ENCODE measurements at regions of chr22 and their contacts with region 1.

Region 1: DNA sequence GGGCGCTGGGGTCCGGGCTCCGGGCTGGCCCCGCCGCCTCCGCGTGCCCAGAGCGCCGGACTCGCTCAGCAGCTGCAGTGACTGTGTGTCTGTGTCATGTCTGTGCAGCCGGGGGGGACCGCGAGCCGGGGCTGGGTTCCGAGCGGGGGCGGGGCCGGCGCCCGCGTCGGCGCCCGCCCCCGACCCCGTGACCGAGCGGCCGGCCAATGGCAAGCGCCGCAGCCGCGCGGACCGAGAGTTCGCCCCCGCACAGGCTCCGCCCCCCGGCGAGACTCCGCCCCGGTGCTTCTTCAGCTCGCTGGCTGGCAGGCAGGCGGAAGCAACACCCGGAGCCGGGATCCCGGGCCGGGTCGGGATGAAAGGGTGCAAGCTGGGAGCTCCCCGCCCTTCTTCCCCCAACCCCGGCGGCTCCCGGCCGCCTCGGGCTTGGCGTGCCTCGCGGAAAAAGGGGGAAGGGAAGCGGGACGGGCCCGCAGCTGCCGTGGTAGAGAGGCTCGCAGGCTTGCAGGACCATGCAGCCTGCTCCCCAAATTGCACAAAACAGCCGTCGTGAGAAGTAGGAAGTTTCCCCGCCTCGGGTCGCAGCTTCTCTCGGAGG is 750 bp upstream of the LARGE1 start:
- DNase-seq: peak; percentile 95 to 97
- ATAC-seq: peak; percentile 78 to 81
- H3K4me3 ChIP-seq: peak overlapping the region; percentile 71 to 95 (median 82)
- H3K27ac ChIP-seq: peak overlapping the region; percentile 74 to 87 (median 78)
- H3K4me1 ChIP-seq: peaks cover 33 to 40% of the 10 kb centered on the region in 2 donors
- H3K27me3 ChIP-seq: no peaks in the 10 kb centered on the region
- CTCF ChIP-seq: peak in 1 of 5 experiments; percentile 10
- POLR2A ChIP-seq: peak; percentile 95 to 97

Region 2: DNA sequence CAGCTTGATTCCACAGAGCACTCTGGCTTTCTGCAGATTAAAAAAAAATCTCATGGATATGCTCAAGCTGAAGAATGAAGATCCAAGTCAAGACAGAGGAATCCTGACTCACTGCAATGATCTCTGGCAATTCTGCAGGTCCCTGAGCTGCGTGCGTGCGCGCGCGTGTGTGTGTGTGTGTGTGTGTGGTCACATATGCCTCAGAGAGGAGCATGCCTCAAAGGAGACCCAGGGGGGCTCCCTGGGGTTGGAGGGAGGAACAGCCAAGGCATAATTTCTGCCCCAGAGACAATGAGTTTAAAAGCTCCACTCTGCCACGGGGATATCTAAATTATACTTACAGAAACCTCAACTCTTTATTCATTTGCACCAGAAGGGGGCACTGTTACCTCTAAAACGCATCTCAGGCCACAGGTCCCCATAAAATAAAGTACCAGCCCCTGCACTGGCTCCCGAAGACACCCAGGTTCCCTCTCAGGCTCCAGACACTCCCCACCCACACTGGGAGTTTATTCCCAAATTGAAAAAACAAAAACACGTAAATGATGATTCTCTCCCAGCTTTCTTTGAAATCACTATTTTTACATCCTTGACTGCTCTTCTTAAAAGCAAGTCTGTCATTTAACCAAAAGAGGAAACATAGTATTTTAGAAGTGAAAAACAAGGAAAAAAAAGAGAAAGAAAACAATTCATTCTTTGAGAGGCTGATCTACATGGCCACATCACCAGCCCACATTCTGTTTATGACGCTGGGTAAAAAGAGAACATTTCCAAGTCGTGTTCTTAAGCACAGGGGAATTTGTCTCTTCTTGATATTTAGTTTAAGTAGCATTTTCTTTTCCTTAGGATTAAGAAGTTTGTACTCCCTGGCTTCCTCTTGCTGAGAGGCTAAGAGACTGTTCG is 401.7 kb before region 1 on chr22:
- in situ Hi-C with region 1: no loop called
- intact Hi-C with region 1: loop called (anchors 1 kb)
- DNase-seq: no peak
- ATAC-seq: peak; percentile 59 to 71
- H3K4me3 ChIP-seq: no peak overlapping the region
- H3K27ac ChIP-seq: no peak overlapping the region
- H3K4me1 ChIP-seq: peaks cover 4 to 11% of the 10 kb centered on the region in 2 donors
- H3K27me3 ChIP-seq: no peaks in the 10 kb centered on the region
- CTCF ChIP-seq: peak; percentile 31 to 71 (median 63)
- POLR2A ChIP-seq: no peak

Region 3: DNA sequence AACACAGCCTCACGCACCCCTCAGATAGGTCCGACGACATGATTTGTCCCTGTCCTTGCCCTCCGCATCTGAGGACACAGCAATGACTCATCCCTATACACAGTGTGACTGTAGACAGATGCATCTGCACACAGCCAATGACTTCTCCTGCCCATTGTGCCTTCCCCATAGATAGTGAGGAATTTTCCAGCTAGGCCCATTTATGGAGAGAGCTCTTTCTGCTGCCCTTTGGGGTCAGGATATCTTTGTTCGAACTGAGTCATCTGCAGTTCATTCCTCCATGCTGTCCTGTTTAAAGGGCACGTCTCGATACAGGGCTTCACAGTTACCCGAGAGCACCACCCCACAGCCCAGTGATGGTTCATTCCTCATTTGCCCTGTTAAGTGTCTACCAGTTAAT is 97.5 kb before region 1 on chr22:
- in situ Hi-C with region 1: loop called in 1 of 4 experiments (anchors 10 kb)
- intact Hi-C with region 1: loop called (anchors 5 kb)
- DNase-seq: peak; percentile 56 to 67
- ATAC-seq: peak; percentile 64 to 79
- H3K4me3 ChIP-seq: no peak overlapping the region
- H3K27ac ChIP-seq: peak overlapping the region; percentile 74 to 83 (median 80)
- H3K4me1 ChIP-seq: peaks cover 51 to 68% of the 10 kb centered on the region in 2 donors
- H3K27me3 ChIP-seq: no peaks in the 10 kb centered on the region
- CTCF ChIP-seq: no peak
- POLR2A ChIP-seq: no peak

Region 4: DNA sequence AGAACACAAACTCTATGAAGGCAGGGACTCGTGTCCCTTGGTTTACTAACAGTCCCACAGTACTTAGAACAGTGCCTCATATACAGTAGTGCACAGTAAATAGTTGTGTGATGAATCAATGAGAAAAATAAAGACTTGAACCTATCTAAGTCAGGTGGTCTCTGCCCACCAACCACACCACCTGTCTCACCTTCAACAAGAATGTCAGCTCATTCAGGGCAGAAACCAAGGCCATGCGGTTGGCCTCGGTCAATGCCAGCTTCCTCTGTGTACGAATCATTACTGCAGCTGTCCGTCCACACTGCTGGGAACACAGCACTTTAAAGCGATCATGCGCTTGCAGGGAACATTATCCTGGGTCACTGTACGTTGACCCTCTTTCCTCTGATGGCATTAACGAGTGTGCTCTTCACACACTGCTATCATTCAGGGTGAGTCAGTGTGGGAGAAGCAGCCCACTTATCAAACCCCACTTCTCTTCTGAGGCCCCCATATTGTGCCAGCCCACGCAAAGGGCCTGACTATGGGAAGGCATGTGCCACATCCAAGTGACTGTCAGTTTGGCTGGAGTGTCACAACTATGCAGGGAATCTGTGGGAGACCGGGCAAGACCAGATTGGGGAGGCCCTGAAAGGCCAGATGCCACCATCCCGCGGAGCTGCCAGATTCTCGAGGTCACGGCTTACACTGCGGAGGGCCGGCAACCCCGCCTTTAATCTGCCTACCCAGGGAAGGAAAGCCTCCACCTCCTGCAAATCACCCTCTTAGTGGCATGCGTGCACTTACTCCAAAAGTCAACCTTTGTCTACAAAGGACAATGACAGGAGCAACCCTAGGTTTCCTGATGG is 36.8 kb before region 1 on chr22:
- in situ Hi-C with region 1: no loop called
- intact Hi-C with region 1: loop called (anchors 2 kb)
- DNase-seq: peak; percentile 74 to 84
- ATAC-seq: peak; percentile 88 to 89
- H3K4me3 ChIP-seq: peak overlapping the region in 2 of 4 donors; percentile 23 to 32
- H3K27ac ChIP-seq: peak overlapping the region; percentile 82 to 92 (median 87)
- H3K4me1 ChIP-seq: peaks cover 28 to 58% of the 10 kb centered on the region in 2 donors
- H3K27me3 ChIP-seq: no peaks in the 10 kb centered on the region
- CTCF ChIP-seq: no peak
- POLR2A ChIP-seq: peak; percentile 23 to 67

Region 5: DNA sequence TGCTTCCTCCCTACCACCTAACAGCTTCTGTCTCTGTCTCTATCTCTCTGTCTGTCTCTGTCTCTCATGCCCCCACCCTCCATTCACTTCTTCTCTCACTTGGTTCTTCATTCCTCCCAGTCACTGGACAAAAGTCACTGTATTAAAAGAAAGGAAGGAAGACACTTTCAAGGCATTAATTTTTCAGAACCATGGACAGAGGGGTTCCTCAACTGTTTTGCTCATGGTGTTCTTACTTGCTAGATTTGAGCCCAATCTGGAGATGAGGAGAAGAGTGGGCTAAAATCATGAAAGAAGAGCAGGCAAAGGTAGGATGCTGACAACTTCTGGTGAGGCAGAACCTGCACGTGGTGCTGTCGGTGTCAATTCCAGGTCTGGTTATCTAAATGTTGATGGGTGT is 115.9 kb after region 1 on chr22:
- in situ Hi-C with region 1: no loop called
- intact Hi-C with region 1: no loop called
- DNase-seq: no peak
- ATAC-seq: no peak
- H3K4me3 ChIP-seq: no peak overlapping the region
- H3K27ac ChIP-seq: no peak overlapping the region
- H3K4me1 ChIP-seq: no peaks in the 10 kb centered on the region
- H3K27me3 ChIP-seq: no peaks in the 10 kb centered on the region
- CTCF ChIP-seq: no peak
- POLR2A ChIP-seq: no peak

Region 6: DNA sequence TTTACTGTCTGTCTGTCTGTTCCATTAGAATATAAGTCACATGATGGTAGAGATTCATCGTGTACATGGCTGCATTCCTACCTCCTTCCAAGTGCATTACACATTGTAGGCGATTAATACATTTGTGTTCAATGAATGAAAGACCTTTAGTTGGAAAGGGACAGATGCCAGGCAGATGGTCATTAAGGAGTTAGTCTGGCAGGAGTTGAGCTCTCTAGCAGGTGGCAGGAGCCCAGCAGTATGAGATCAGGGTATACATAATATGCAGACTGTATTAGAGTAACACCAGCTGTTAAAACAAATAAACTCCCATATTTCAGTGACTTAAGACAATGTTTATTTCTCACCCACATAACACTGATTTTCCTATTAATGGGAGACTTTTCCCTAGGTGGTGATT is 147.0 kb after region 1 on chr22:
- in situ Hi-C with region 1: no loop called
- intact Hi-C with region 1: no loop called
- DNase-seq: no peak
- ATAC-seq: no peak
- H3K4me3 ChIP-seq: no peak overlapping the region
- H3K27ac ChIP-seq: no peak overlapping the region
- H3K4me1 ChIP-seq: no peaks in the 10 kb centered on the region
- H3K27me3 ChIP-seq: no peaks in the 10 kb centered on the region
- CTCF ChIP-seq: no peak
- POLR2A ChIP-seq: no peak

Region 7: GRCh38 chr22:34111210-34111824 is 190.3 kb after region 1 on chr22:
- in situ Hi-C with region 1: loop called in 3 of 4 experiments (anchors 5 to 10 kb)
- intact Hi-C with region 1: loop called (anchors 2 kb)
- DNase-seq: peak in 1 of 2 donors; percentile 13
- ATAC-seq: peak; percentile 63 to 64
- H3K4me3 ChIP-seq: no peak overlapping the region
- H3K27ac ChIP-seq: no peak overlapping the region
- H3K4me1 ChIP-seq: no peaks in the 10 kb centered on the region
- H3K27me3 ChIP-seq: peaks cover 0 to 5% (median 0%) of the 10 kb centered on the region in 3 donors
- CTCF ChIP-seq: peak; percentile 30 to 72 (median 54)
- POLR2A ChIP-seq: no peak

Measured in gastrocnemius medialis (tissue), 4 donors.